ENCODE measurements at regions of chr13 and their contacts with region 1.

Region 1: DNA sequence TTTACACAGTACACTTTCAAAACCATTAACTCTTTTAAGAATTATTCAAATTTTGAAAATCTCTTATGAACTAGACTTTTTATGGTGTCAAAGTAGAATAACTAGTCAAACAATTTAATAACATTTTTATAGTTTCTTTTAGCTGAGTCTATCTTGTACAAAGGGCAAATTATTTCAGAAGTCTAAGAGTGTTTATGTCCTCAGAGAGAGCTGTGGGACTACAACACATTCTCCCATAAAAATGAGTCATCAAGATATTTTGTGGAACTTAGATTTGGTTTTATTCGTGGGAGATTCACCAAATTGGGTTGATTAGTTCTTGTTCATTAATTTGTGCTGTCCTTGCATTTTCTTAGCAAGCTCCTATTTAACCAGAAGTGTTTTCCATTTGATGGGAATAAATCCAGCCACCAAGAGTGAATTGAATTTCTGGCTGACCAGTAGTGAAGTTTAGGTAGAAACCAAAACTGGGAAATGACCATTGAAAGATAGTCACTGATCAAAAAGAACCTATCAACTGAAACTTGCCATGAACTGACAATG is 291.0 kb downstream of the DLEU7 start:
- DNase-seq: no peak
- ATAC-seq: no peak
- H3K4me3 ChIP-seq: no peak overlapping the region
- H3K27ac ChIP-seq: no peak overlapping the region
- H3K4me1 ChIP-seq: peaks cover 3 to 13% of the 10 kb centered on the region in 2 donors
- H3K27me3 ChIP-seq: no peaks in the 10 kb centered on the region
- CTCF ChIP-seq: no peak
- POLR2A ChIP-seq: no peak

Region 2: DNA sequence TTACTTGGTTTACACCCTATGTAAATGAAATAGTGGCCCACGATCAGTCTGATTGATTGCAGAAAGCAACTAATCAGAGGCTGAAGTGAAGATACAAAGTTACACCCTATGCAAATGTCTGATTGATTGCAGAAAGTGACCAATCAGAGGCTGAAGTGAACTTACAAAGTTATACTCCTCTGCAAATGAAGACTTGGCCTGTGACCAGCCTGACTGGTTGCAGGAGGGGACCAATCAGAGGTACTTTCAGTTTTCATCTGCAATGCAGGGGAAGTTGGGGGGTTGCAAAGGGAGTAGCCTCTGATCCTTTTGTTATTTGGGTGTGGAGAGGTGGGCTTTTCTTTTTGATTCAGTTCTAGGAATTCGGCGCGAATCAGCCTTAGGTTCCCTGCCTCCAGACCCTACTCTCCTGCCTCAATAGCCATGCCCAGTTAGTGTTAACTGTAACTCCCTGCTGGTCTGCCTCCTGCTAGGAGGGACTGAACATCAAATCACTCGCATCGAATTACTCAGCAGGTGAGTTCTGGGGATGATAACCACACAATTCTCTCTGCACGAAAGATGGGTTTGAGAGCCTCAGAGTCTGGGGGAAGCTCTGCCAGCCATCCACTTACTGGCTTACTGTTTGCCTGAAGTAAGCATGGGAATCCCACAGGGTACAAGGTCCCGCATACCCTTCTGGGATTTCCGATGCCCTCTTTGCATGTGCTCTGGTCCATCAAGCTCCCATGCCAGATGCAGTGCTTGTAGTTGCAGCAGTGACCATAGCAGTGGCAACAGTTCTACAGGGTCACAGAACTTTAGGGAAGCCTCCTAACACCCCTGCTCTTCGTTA is 916.7 kb before region 1 on chr13:
- in situ Hi-C with region 1: no loop called
- intact Hi-C with region 1: no loop called
- DNase-seq: no peak
- ATAC-seq: no peak
- H3K4me3 ChIP-seq: peak overlapping the region in 3 of 4 donors; percentile 2 to 14 (median 12)
- H3K27ac ChIP-seq: no peak overlapping the region
- H3K4me1 ChIP-seq: peaks cover 0 to 5% of the 10 kb centered on the region in 2 donors
- H3K27me3 ChIP-seq: no peaks in the 10 kb centered on the region
- CTCF ChIP-seq: no peak
- POLR2A ChIP-seq: no peak

Region 3: GRCh38 chr13:50170447-50171037 is 382.0 kb before region 1 on chr13:
- in situ Hi-C with region 1: loop called in 1 of 4 experiments (anchors 10 kb)
- intact Hi-C with region 1: no loop called
- DNase-seq: no peak
- ATAC-seq: no peak
- H3K4me3 ChIP-seq: no peak overlapping the region
- H3K27ac ChIP-seq: no peak overlapping the region
- H3K4me1 ChIP-seq: no peaks in the 10 kb centered on the region
- H3K27me3 ChIP-seq: no peaks in the 10 kb centered on the region
- CTCF ChIP-seq: peak in 1 of 5 experiments; percentile 27
- POLR2A ChIP-seq: no peak

Measured in gastrocnemius medialis (tissue), 4 donors.